ENCODE measurements at regions of chr2 and their contacts with region 1.

Region 1: GRCh38 chr2:64945973-64946768 is 43.0 kb upstream of the SLC1A4 start:
- DNase-seq: peak; percentile 77
- ATAC-seq: peak; percentile 89
- H3K4me3 ChIP-seq: peak overlapping the region in 4 of 5 experiments; percentile 3 to 49 (median 19)
- H3K4me3 Mint-ChIP-seq: peak overlapping the region; percentile 82
- H3K27ac ChIP-seq: peak overlapping the region; percentile 87
- H3K27ac Mint-ChIP-seq: peak overlapping the region; percentile 94
- H3K4me1 ChIP-seq: peaks cover 38 to 43% of the 10 kb centered on the region in 2 donors
- H3K4me1 Mint-ChIP-seq: peaks cover 64% of the 10 kb centered on the region
- H3K27me3 ChIP-seq: no peaks in the 10 kb centered on the region
- H3K27me3 Mint-ChIP-seq: no peaks in the 10 kb centered on the region
- CTCF ChIP-seq: no peak

Region 2: GRCh38 chr2:65025453-65026123 is 79.4 kb after region 1 on chr2:
- CTCF ChIA-PET with region 1: interaction called, 5 read pairs
- POLR2A ChIA-PET with region 1: interaction called, 11 read pairs
- intact Hi-C with region 1: no loop called
- DNase-seq: peak; percentile 66
- ATAC-seq: peak; percentile 31
- H3K4me3 ChIP-seq: peak overlapping the region in 1 of 5 experiments; percentile 24
- H3K4me3 Mint-ChIP-seq: peak overlapping the region; percentile 72
- H3K27ac ChIP-seq: peak overlapping the region; percentile 75 to 86
- H3K27ac Mint-ChIP-seq: peak overlapping the region; percentile 90
- H3K4me1 ChIP-seq: peaks cover 55 to 69% of the 10 kb centered on the region in 2 donors
- H3K4me1 Mint-ChIP-seq: peaks cover 56% of the 10 kb centered on the region
- H3K27me3 ChIP-seq: no peaks in the 10 kb centered on the region
- H3K27me3 Mint-ChIP-seq: no peaks in the 10 kb centered on the region
- CTCF ChIP-seq: no peak

Measured in B cell (primary cell).